Psoas muscle (tissue), 8 donors: ENCODE measurements at regions of chr20 and their contacts with region 1.

Region 1: DNA sequence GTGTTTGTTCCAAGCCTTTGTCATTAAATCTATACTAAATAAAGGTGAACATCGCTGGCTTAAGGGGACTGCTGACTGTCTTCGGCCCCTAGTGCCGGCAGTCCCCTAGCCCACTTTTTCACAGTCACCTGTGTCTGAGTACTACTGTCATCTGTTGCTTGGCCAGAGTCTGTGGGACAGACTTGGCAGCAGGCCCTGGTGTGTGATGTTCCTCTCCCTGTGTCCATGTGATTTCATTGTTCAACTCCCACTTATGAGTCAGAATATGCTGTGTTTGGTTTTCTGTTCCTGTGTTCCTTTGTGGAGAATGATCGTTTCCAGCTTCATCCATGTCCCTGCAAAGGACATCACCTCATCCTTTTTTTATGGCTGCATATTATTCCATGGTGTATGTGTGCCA is 133.4 kb downstream of the HAO1 start:
- DNase-seq: no peak
- ATAC-seq: no peak
- H3K4me3 ChIP-seq: no peak overlapping the region
- H3K27ac ChIP-seq: no peak overlapping the region
- H3K4me1 ChIP-seq: no peaks in the 10 kb centered on the region
- H3K27me3 ChIP-seq: no peaks in the 10 kb centered on the region
- CTCF ChIP-seq: no peak

Region 2: GRCh38 chr20:7843613-7844012 is 36.8 kb after region 1 on chr20:
- intact Hi-C with region 1: loop called in 1 of 2 experiments (anchors 1 kb)
- DNase-seq: peak; percentile 50 to 53
- ATAC-seq: no peak
- H3K4me3 ChIP-seq: no peak overlapping the region
- H3K27ac ChIP-seq: no peak overlapping the region
- H3K4me1 ChIP-seq: no peaks in the 10 kb centered on the region
- H3K27me3 ChIP-seq: no peaks in the 10 kb centered on the region
- CTCF ChIP-seq: no peak

Region 3: DNA sequence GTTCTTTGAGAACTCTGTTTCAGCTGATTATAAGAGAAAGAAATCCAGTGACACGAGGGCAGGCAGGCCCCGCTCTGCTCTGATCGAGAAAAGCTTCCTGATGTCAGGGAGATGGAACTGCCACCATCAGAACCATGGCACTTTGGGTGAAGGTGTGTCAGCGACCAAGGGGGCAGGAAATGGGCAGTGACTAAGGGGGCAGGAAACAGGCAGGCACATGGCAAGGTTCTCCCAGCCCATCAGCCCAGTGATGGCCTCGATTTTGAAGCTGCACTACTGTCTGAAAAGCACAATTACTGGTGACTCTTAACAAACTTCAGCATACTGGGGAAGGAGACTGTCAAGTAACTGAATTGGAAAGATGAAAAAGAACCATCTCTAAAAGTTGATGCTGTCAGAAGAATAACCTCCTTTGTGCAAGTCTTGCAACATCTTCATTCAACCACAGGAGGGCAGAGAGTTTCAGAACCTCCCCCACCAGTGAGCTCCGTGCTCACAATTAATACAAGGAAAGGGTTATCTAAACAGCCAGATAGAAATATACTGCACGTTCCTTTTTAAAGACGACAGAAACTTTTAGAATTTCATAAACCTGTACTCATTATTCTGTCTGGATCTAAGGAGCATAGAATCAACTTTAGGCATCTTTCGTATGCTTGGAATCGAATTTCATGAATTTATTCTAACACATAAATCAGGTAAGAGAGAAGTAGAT is 173.7 kb after region 1 on chr20:
- intact Hi-C with region 1: no loop called
- DNase-seq: no peak
- ATAC-seq: no peak
- H3K4me3 ChIP-seq: no peak overlapping the region
- H3K27ac ChIP-seq: no peak overlapping the region
- H3K4me1 ChIP-seq: no peaks in the 10 kb centered on the region
- H3K27me3 ChIP-seq: no peaks in the 10 kb centered on the region
- CTCF ChIP-seq: peak; percentile 22